OCI-LY7 (cell line): ENCODE measurements at regions of chr18 and their contacts with region 1.

Region 1: DNA sequence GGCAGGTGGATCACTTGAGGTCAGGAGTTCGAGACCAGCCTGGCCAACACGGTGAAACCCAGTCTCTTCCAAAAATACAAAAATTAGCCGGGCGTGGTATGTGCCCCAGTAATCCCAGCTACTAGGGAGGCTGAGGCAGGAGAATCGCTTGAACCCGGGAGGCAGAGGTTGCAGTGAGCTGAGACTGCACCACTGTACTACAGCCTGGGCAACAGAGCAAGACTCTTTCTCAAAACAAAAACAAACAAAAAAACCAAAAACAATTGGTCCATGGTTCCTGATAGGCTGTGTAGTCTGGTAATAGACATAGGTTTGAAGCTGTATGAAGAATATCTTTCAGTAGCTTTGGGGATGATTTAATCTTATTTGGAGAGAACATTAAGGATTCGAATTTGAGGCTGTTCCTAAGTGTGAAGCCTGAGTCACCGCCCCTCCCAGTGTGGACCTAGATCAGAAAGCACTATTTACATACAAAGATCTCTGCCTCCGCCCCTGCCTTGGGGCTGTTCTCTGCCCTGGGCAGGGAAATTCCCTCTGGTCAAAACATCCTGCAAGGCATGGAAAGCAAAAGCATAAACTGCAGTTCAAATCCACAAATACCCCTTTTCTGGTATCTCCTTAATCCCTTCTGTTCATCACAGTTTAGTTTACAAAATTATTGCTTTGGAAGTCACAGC is 52.8 kb upstream of the PMAIP1 start:
- DNase-seq: no peak
- H3K4me3 ChIP-seq: no peak overlapping the region
- H3K27ac ChIP-seq: peak overlapping the region; percentile 28
- H3K4me1 ChIP-seq: peaks cover 32% of the 10 kb centered on the region
- CTCF ChIP-seq: no peak

Region 2: GRCh38 chr18:59957971-59958595 is 111.1 kb after region 1 on chr18:
- CTCF ChIA-PET with region 1: no interaction called
- POLR2A ChIA-PET with region 1: no interaction called
- intact Hi-C with region 1: loop called (anchors 5 kb)
- DNase-seq: peak; percentile 79
- H3K4me3 ChIP-seq: no peak overlapping the region
- H3K27ac ChIP-seq: peak overlapping the region; percentile 67
- H3K4me1 ChIP-seq: peaks cover 64% of the 10 kb centered on the region
- CTCF ChIP-seq: no peak